ENCODE measurements at regions of chr19 and their contacts with region 1.

Region 1: GRCh38 chr19:29263305-29264135 is 50.6 kb upstream of the UQCRFS1 start:
- DNase-seq: peak; percentile 65
- H3K4me3 ChIP-seq: no peak overlapping the region
- H3K27ac ChIP-seq: no peak overlapping the region
- H3K4me1 ChIP-seq: no peaks in the 10 kb centered on the region
- H3K27me3 ChIP-seq: peaks cover 20% of the 10 kb centered on the region; the same call in 1 of the 2 replicates
- CTCF ChIP-seq: peak; percentile 74
- EP300 ChIP-seq: no peak
- RAD21 ChIP-seq: peak; percentile 64

Region 2: GRCh38 chr19:29084266-29084665 is 179.3 kb before region 1 on chr19:
- CTCF ChIA-PET with region 1: interaction called, 10 read pairs
- POLR2A ChIA-PET with region 1: no interaction called
- DNase-seq: peak; percentile 49
- H3K4me3 ChIP-seq: no peak overlapping the region
- H3K27ac ChIP-seq: no peak overlapping the region
- H3K4me1 ChIP-seq: no peaks in the 10 kb centered on the region
- H3K27me3 ChIP-seq: peaks cover 32% of the 10 kb centered on the region; the same call in 1 of the 2 replicates
- CTCF ChIP-seq: peak; percentile 52
- EP300 ChIP-seq: no peak
- RAD21 ChIP-seq: peak; percentile 26

Region 3: GRCh38 chr19:29233591-29233990 is 29.9 kb before region 1 on chr19:
- CTCF ChIA-PET with region 1: interaction called, 12 read pairs
- POLR2A ChIA-PET with region 1: no interaction called
- DNase-seq: no peak
- H3K4me3 ChIP-seq: no peak overlapping the region
- H3K27ac ChIP-seq: no peak overlapping the region
- H3K4me1 ChIP-seq: no peaks in the 10 kb centered on the region
- H3K27me3 ChIP-seq: no peaks in the 10 kb centered on the region
- CTCF ChIP-seq: no peak
- EP300 ChIP-seq: no peak
- RAD21 ChIP-seq: no peak

Region 4: GRCh38 chr19:29247872-29248271 is 15.6 kb before region 1 on chr19:
- CTCF ChIA-PET with region 1: interaction called, 17 read pairs
- POLR2A ChIA-PET with region 1: no interaction called
- DNase-seq: no peak
- H3K4me3 ChIP-seq: no peak overlapping the region
- H3K27ac ChIP-seq: no peak overlapping the region
- H3K4me1 ChIP-seq: peaks cover 0 to 12% of the 10 kb centered on the region in 2 experiments; a peak in 2 of 4 replicates
- H3K27me3 ChIP-seq: peaks cover 32% of the 10 kb centered on the region
- CTCF ChIP-seq: no peak
- EP300 ChIP-seq: no peak
- RAD21 ChIP-seq: no peak

Region 5: GRCh38 chr19:29278716-29279115 is 15.2 kb after region 1 on chr19:
- CTCF ChIA-PET with region 1: interaction called, 36 read pairs
- POLR2A ChIA-PET with region 1: no interaction called
- DNase-seq: no peak
- H3K4me3 ChIP-seq: no peak overlapping the region
- H3K27ac ChIP-seq: no peak overlapping the region
- H3K4me1 ChIP-seq: no peaks in the 10 kb centered on the region
- H3K27me3 ChIP-seq: peaks cover 15% of the 10 kb centered on the region; the same call in 1 of the 2 replicates
- CTCF ChIP-seq: no peak
- EP300 ChIP-seq: no peak
- RAD21 ChIP-seq: no peak

Region 6: GRCh38 chr19:29290853-29291252 is 27.3 kb after region 1 on chr19:
- CTCF ChIA-PET with region 1: interaction called, 10 read pairs
- POLR2A ChIA-PET with region 1: no interaction called
- DNase-seq: no peak
- H3K4me3 ChIP-seq: no peak overlapping the region
- H3K27ac ChIP-seq: no peak overlapping the region
- H3K4me1 ChIP-seq: peaks cover 0 to 3% of the 10 kb centered on the region in 2 experiments; a peak in 1 of 4 replicates
- H3K27me3 ChIP-seq: no peaks in the 10 kb centered on the region; the same call in 1 of the 2 replicates
- CTCF ChIP-seq: no peak
- EP300 ChIP-seq: no peak
- RAD21 ChIP-seq: no peak